ENCODE measurements at regions of chr2 and their contacts with region 1.

Region 1: DNA sequence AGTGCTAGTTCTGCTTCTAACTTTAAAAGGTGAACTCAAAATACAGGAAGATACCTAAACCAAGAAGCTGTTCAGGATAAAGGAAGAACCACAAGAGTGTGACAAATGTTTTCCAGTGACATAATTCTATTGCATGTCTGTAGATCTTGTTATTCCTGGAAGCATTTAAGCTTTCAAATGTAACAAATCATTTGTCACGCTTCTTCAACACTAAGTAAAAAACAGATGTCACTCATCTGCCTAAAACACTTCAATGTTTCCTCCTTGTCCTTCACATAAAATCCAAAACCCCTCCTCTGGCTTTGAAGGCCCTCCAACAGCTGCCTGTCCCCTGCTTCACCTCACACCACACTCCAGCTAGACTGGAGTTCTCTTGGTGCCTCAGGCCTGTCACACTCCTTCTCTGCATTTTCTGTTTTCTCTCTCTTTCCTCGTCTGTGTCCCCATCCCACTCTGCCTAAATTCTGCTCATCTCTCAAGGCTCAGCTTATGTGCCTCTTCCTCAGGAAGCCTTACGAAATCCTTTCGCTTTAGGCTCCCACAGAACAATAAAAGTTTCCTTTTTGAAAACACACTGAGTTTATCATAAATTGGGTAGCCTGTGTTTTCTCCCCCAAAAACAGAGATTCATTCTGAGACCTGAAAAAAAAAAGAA is 6.4 kb upstream of the CLEC4F start:
- DNase-seq: no peak
- H3K4me3 Mint-ChIP-seq: peak overlapping the region; percentile 19
- H3K27ac Mint-ChIP-seq: peak overlapping the region; percentile 83
- H3K4me1 Mint-ChIP-seq: peaks cover 36% of the 10 kb centered on the region
- H3K27me3 Mint-ChIP-seq: no peaks in the 10 kb centered on the region

Region 2: DNA sequence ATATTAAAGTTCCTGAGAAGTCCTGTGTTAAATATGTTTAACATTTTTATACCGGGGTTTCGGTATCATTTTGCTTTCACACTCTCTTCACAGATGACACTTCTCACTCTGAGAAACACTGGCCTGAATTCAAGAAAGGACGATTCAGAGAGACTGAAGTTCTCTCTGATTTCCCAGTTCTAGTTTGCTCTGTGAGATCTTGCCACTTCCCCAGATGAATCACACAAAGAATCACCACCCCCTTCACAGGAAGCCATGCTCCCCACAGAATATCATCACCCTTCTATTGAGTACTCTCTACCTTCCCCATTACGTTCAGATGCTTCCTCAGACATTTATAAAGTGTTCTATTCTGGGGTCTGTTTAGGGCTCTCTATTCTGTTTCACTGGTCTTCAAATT is 24.9 kb after region 1 on chr2:
- intact Hi-C with region 1: loop called (anchors 2 kb)
- DNase-seq: peak; percentile 32
- H3K4me3 Mint-ChIP-seq: peak overlapping the region; percentile 23
- H3K27ac Mint-ChIP-seq: peak overlapping the region; percentile 32
- H3K4me1 Mint-ChIP-seq: peaks cover 26% of the 10 kb centered on the region
- H3K27me3 Mint-ChIP-seq: peaks cover 1% of the 10 kb centered on the region

Region 3: DNA sequence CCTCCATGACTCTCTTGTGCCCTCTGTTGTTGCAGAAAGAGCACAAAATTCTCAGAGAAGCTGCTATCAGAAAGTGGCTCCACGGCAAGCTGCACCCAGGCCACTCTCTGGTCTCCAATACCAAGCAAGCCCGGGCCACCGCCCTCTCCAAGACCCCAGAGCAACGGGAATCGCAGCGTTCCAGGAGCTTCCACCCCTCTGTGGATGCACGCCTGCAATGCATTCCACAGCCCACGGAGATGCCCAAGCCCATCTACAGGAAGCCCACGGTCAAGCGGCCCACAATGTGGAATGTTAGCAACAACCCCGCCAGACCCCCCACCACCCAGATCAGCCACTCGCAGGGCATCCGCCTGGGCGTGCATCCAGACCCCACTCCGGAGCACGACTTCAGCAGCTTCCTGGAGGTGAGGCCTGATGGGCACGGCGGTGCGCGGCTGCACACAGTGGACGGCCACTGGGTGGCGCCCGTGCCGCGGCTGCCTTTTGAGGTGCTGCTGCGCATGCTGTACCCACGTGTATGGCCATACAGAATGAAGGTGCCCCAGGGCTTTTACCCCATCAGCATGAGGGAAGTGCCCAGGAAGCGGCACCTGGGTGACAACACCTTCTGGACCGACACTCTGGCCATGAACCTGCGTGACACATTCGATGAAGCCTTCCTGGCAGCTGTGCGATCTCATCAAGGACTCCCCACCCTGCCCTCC is 157.9 kb after region 1 on chr2:
- intact Hi-C with region 1: no loop called
- DNase-seq: peak; percentile 73
- H3K4me3 Mint-ChIP-seq: no peak overlapping the region
- H3K27ac Mint-ChIP-seq: peak overlapping the region; percentile 2
- H3K4me1 Mint-ChIP-seq: peaks cover 7% of the 10 kb centered on the region
- H3K27me3 Mint-ChIP-seq: no peaks in the 10 kb centered on the region

Region 4: DNA sequence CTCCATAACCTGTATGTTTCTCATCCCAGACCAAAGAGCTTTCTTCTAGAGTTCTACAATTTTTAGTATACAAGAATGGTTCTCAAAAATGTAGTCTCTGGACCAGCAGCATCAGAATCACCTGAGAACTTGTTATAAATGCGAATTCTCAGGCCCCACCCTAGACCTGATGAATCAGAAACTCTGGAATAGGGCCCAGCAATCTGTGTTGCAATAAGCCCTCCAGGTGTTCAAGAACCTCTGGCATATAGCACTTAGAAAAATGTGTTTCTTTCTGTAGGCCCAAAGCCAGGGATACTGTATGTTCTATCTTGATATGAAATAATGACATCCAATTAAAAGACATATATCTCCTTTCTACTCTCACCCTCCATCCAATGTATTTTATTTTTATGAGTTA is 389.7 kb after region 1 on chr2:
- intact Hi-C with region 1: no loop called
- DNase-seq: no peak
- H3K4me3 Mint-ChIP-seq: no peak overlapping the region
- H3K27ac Mint-ChIP-seq: no peak overlapping the region
- H3K4me1 Mint-ChIP-seq: no peaks in the 10 kb centered on the region
- H3K27me3 Mint-ChIP-seq: peaks cover 10% of the 10 kb centered on the region